ENCODE measurements at regions of chr7 and their contacts with region 1.

Region 1: GRCh38 chr7:26200444-26201246 is at the start of gene HNRNPA2B1:
- DNase-seq: peak; percentile 89 to 100 (median 99)
- ATAC-seq: peak; percentile 74 to 78
- H3K4me3 Mint-ChIP-seq: peak within 1 kb of the TSS; percentile 96 to 100 (median 100)
- H3K27ac Mint-ChIP-seq: peak within 1 kb of the TSS; percentile 90 to 100 (median 100)
- H3K4me1 Mint-ChIP-seq: peaks cover 29 to 58% (median 53%) of the 10 kb centered on the region in 4 donors
- H3K27me3 Mint-ChIP-seq: peaks cover 0 to 9% (median 0%) of the 10 kb centered on the region in 5 donors
- polyA plus RNA-seq, gene HNRNPA2B1: 506 to 789 (median 577) TPM

Region 2: GRCh38 chr7:25894902-25895791 is 305.5 kb before region 1 on chr7:
- POLR2A ChIA-PET with region 1: interaction called, 11 read pairs
- DNase-seq: peak; percentile 44 to 81 (median 57)
- ATAC-seq: peak; percentile 71 to 84
- H3K4me3 Mint-ChIP-seq: peak overlapping the region; percentile 54 to 95 (median 66)
- H3K27ac Mint-ChIP-seq: peak overlapping the region in 2 of 10 donors; percentile 2 to 51
- H3K4me1 Mint-ChIP-seq: peaks cover 11 to 32% (median 26%) of the 10 kb centered on the region in 4 donors
- H3K27me3 Mint-ChIP-seq: peaks cover 0 to 17% (median 3%) of the 10 kb centered on the region in 5 donors

Region 3: GRCh38 chr7:26090927-26091519 is 109.6 kb before region 1 on chr7:
- POLR2A ChIA-PET with region 1: interaction called, 184 read pairs
- DNase-seq: peak in 3 of 10 donors; percentile 60 to 65 (median 62)
- ATAC-seq: peak; percentile 72 to 83
- H3K4me3 Mint-ChIP-seq: peak overlapping the region in 6 of 10 donors; percentile 11 to 67 (median 41)
- H3K27ac Mint-ChIP-seq: peak overlapping the region in 5 of 10 donors; percentile 0 to 49 (median 24)
- H3K4me1 Mint-ChIP-seq: peaks cover 12 to 25% (median 21%) of the 10 kb centered on the region in 4 donors
- H3K27me3 Mint-ChIP-seq: no peaks in the 10 kb centered on the region

Region 4: DNA sequence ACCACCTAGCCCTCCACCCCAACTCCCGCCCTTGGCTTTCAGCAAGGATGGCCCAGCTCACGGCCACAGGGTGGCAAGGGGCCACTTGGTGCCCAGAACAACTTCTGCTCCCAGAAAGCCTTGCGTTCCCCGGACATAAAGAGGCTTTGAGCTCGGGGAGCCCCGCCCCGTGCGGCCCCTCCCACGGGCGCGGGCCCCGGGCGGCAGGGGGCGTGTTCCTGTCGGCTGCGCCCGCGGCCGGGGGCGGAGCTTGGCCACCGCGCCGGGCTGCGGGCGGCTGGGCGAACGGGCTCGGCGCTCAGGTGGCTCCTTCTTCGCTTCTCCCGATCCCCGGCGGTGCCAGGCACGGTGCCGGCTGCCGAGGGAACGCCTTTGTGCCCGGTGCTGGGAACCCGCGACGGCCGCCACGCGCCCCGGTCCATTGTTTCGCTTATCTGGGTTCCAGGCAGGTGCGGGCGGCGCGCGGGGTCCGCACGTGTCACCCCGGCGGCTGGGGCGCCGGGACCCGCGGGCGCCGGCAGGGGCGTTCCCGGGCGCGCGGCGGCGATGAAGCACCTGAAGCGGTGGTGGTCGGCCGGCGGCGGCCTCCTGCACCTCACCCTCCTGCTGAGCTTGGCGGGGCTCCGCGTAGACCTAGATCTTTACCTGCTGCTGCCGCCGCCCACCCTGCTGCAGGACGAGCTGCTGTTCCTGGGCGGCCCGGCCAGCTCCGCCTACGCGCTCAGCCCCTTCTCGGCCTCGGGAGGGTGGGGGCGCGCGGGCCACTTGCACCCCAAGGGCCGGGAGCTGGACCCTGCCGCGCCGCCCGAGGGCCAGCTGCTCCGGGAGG is 48.5 kb before region 1 on chr7 and contains the start of gene NFE2L3:
- POLR2A ChIA-PET with region 1: interaction called, 77 read pairs
- DNase-seq: peak; percentile 60 to 84 (median 78)
- ATAC-seq: peak; percentile 72 to 75
- H3K4me3 Mint-ChIP-seq: peak within 1 kb of the TSS; percentile 73 to 94 (median 90)
- H3K27ac Mint-ChIP-seq: peak within 1 kb of the TSS; percentile 66 to 92 (median 90)
- H3K4me1 Mint-ChIP-seq: peaks cover 21 to 56% (median 47%) of the 10 kb centered on the region in 4 donors
- H3K27me3 Mint-ChIP-seq: no peaks in the 10 kb centered on the region
- polyA plus RNA-seq, gene NFE2L3: 1.4 to 4.3 (median 2.9) TPM

Region 5: GRCh38 chr7:26291699-26292538 is 91.3 kb after region 1 on chr7 and contains the start of gene SNX10:
- POLR2A ChIA-PET with region 1: interaction called, 32 read pairs
- DNase-seq: peak; percentile 54 to 84 (median 69)
- ATAC-seq: peak; percentile 89
- H3K4me3 Mint-ChIP-seq: peak within 1 kb of the TSS; percentile 85 to 96 (median 92)
- H3K27ac Mint-ChIP-seq: peak within 1 kb of the TSS; percentile 54 to 93 (median 88)
- H3K4me1 Mint-ChIP-seq: peaks cover 10 to 45% (median 35%) of the 10 kb centered on the region in 4 donors
- H3K27me3 Mint-ChIP-seq: no peaks in the 10 kb centered on the region
- polyA plus RNA-seq, gene SNX10: 10.9 to 14.7 (median 13.5) TPM